PC-3 (cell line): ENCODE measurements at regions of chrX and their contacts with region 1.

Region 1: GRCh38 chrX:137194164-137194563 is 160.4 kb upstream of the GPR101 start:
- DNase-seq: peak; percentile 72
- ATAC-seq: peak; percentile 23; the same call in 1 of the 2 replicates
- H3K4me3 ChIP-seq: no peak overlapping the region
- H3K27ac ChIP-seq: no peak overlapping the region
- H3K4me1 ChIP-seq: peaks cover 38% of the 10 kb centered on the region
- H3K27me3 ChIP-seq: no peaks in the 10 kb centered on the region
- CTCF ChIP-seq: peak; percentile 73

Region 2: DNA sequence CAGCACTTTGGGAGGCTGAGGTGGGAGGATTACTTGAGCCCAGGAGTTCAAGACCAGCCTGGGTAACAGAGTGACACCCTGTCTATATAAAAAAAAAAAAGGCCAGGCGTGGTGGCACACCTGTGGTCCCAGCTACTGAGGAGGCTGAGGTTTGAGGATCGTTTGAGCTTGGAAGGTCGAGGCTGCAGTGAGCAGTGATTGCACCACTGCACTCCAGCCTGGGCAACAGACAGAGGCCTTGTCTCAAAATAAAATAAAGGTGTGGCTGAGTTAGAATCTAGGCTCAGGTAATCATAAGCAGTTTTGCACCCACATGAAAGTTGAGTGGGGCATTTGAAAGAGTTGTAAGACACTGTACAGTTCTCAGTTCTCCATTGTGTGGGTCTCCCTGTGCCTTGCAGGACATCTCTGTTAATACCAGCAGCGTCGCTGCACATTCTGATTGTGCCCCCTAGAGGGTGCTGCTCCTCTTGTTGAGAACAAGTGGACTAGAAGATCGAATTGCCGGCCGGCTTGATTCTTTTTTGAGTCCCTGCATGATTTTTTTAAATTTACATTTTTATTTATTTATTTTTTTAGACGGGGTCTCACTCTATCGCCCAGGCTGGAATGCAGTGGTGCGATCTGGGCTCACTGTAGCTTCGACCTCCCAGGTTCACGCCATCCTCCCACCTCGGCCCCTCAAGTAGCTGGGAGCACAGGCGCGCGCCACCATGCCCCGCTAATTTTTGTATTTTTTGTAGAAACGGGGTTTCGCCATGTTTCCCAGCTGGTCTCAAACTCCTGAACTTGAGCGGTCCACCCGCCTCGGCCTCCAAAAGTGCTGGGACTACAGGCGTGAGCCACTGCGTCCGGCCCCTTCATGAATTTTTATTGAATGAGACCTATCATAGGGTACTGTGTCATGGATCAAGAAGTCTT is 240.0 kb before region 1 on chrX:
- CTCF ChIA-PET with region 1: no interaction called
- POLR2A ChIA-PET with region 1: no interaction called
- intact Hi-C with region 1: loop called (anchors 1 kb)
- DNase-seq: peak; percentile 88
- ATAC-seq: peak; percentile 94
- H3K4me3 ChIP-seq: no peak overlapping the region
- H3K27ac ChIP-seq: no peak overlapping the region
- H3K4me1 ChIP-seq: no peaks in the 10 kb centered on the region
- H3K27me3 ChIP-seq: no peaks in the 10 kb centered on the region
- CTCF ChIP-seq: peak; percentile 66

Region 3: DNA sequence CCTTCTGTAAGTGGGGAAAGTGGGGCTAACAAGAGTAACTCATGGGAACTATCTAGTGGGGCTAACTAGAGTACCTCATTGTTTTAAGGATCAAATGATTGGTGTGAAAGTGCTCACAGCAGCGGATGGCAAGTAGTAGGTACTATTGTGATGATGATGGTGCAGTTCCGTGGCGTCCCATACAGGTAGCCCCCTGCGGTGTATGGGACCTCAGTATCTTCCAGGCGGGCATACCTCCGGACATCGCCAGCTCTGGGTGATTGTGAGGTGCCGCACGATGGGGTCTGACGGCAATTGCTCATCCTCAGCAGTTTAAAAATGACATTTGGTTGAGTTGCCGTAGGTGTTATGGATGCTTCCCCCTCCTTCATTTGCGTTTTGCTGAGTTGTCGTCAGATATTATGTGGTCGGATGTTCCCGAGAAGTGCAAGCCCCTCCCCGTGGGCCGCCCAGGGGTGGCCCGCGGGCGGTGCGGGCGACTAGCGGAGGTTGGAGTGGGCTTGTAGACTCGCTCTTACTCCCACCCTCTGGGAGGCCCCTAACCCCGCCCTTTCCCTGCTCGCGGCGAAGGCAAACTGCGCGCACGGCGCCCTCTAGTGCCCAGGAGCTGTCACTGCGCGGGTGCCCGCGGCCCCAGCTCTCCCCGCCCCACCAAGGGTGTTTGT is 142.1 kb before region 1 on chrX:
- CTCF ChIA-PET with region 1: no interaction called
- POLR2A ChIA-PET with region 1: no interaction called
- intact Hi-C with region 1: loop called (anchors 5 kb)
- DNase-seq: peak; percentile 68
- ATAC-seq: peak; percentile 96
- H3K4me3 ChIP-seq: peak overlapping the region; percentile 69
- H3K27ac ChIP-seq: no peak overlapping the region
- H3K4me1 ChIP-seq: 0 out of 2 replicates have a peak, but pooled peaks cover 3% of the 10 kb centered on the region
- H3K27me3 ChIP-seq: peaks cover 17% of the 10 kb centered on the region; the same call in 1 of the 2 replicates
- CTCF ChIP-seq: peak; percentile 85

Region 4: GRCh38 chrX:137118136-137118535 is 76.0 kb before region 1 on chrX:
- CTCF ChIA-PET with region 1: no interaction called
- POLR2A ChIA-PET with region 1: no interaction called
- intact Hi-C with region 1: loop called (anchors 10 kb)
- DNase-seq: peak; percentile 79
- ATAC-seq: peak; percentile 69
- H3K4me3 ChIP-seq: peak overlapping the region; percentile 35; the same call in 1 of the 2 replicates
- H3K27ac ChIP-seq: peak overlapping the region; percentile 89
- H3K4me1 ChIP-seq: peaks cover 29% of the 10 kb centered on the region
- H3K27me3 ChIP-seq: no peaks in the 10 kb centered on the region
- CTCF ChIP-seq: no peak

Region 5: DNA sequence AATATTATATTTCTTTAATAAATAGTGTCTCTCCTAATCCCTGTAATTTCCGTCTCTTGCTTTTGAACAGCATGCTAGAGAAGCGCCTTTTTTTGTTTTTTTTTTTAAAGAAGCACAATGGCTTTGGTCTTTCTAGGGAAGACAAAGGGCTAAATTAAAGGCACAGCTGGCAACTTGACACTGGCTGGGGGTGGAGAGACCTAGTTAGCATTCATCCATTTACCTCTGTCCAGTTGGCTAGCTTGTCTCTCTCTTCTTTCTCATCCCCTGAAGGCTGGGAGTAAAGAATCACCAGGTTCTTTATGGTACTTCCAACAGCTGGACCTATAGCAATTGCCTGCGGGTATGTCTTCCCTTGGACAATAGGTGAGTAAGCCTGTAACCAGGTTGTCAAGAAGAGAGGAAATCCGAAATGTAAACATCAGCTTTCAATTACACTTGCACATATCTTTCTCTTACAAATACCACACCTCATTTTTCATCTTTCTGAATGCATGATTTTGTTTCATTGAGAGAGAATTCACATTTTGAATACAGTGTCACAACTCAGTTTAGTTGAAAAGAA is 18.0 kb after region 1 on chrX:
- CTCF ChIA-PET with region 1: no interaction called
- POLR2A ChIA-PET with region 1: no interaction called
- intact Hi-C with region 1: loop called (anchors 1 kb)
- DNase-seq: peak; percentile 82
- ATAC-seq: peak; percentile 81
- H3K4me3 ChIP-seq: no peak overlapping the region
- H3K27ac ChIP-seq: peak overlapping the region; percentile 32; the same call in 1 of the 2 replicates
- H3K4me1 ChIP-seq: peaks cover 15% of the 10 kb centered on the region
- H3K27me3 ChIP-seq: no peaks in the 10 kb centered on the region
- CTCF ChIP-seq: no peak